ENCODE measurements at regions of chr10 and their contacts with region 1.

Region 1: DNA sequence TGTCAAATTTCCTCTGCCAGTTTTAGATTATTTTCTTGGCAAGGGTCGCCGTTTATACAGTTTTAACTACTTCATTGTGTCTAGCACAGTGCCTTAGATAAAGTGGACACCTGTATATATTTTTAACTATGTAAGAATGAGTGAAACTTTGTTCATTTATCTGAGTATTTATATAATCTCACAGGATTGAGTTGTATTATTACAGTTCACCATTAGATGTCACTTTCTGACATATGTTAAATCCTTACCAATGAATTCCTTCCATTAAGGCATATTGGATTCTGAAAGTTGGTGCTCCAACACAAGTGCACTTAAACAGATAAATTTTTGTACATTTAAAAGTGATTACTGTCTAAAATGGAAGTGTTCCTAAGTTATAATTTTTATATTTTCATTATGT is 43.0 kb downstream of the ZMYND11 start:
- DNase-seq: peak; percentile 38
- ATAC-seq: peak; percentile 43
- H3K4me3 ChIP-seq: no peak overlapping the region
- H3K27ac ChIP-seq: no peak overlapping the region
- H3K4me1 ChIP-seq: no peaks in the 10 kb centered on the region
- H3K27me3 ChIP-seq: no peaks in the 10 kb centered on the region
- CTCF ChIP-seq: peak; percentile 51

Region 2: DNA sequence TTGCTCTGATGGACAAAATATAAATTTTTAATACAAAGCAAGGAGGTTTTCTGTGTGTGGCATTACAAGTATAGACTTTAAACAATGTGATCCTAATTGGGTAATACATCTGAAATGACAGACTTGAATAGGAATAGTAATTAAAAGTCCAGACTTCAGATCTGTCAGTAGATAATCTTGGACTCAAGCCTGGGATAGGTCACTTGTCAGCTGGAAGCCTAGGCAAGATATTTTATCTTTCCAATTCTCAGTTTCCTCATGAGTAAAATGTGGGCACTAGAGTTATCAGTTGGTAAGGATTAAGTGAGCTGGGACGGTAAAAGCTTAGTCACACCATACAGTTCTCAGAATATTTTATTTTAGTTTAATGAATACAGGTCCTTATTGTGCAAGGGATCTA is 53.3 kb before region 1 on chr10:
- CTCF ChIA-PET with region 1: no interaction called
- POLR2A ChIA-PET with region 1: no interaction called
- intact Hi-C with region 1: no loop called
- DNase-seq: no peak
- ATAC-seq: no peak
- H3K4me3 ChIP-seq: no peak overlapping the region
- H3K27ac ChIP-seq: no peak overlapping the region
- H3K4me1 ChIP-seq: no peaks in the 10 kb centered on the region
- H3K27me3 ChIP-seq: no peaks in the 10 kb centered on the region
- CTCF ChIP-seq: no peak

Region 3: GRCh38 chr10:209361-209760 is 31.2 kb after region 1 on chr10:
- CTCF ChIA-PET with region 1: no interaction called
- POLR2A ChIA-PET with region 1: no interaction called
- intact Hi-C with region 1: loop called (anchors 1 kb)
- DNase-seq: peak; percentile 21
- ATAC-seq: peak; percentile 31; the same call in 1 of the 2 replicates
- H3K4me3 ChIP-seq: no peak overlapping the region
- H3K27ac ChIP-seq: no peak overlapping the region
- H3K4me1 ChIP-seq: no peaks in the 10 kb centered on the region
- H3K27me3 ChIP-seq: no peaks in the 10 kb centered on the region
- CTCF ChIP-seq: peak; percentile 51